PC-9 (cell line): ENCODE measurements at regions of chr1 and their contacts with region 1.

Region 1: GRCh38 chr1:36594023-36594422 is 111.3 kb upstream of the CSF3R start:
- DNase-seq: peak in 1 of 2 experiments; percentile 35
- H3K4me3 ChIP-seq: no peak overlapping the region
- H3K27ac ChIP-seq: no peak overlapping the region
- H3K4me1 ChIP-seq: no peaks in the 10 kb centered on the region
- H3K27me3 ChIP-seq: peaks cover 94% of the 10 kb centered on the region
- CTCF ChIP-seq: no peak

Region 2: GRCh38 chr1:37958690-37959089 is 1364.7 kb after region 1 on chr1:
- CTCF ChIA-PET with region 1: interaction called, 11 read pairs
- POLR2A ChIA-PET with region 1: no interaction called
- intact Hi-C with region 1: no loop called
- DNase-seq: no peak
- H3K4me3 ChIP-seq: no peak overlapping the region
- H3K27ac ChIP-seq: no peak overlapping the region
- H3K4me1 ChIP-seq: no peaks in the 10 kb centered on the region
- H3K27me3 ChIP-seq: no peaks in the 10 kb centered on the region
- CTCF ChIP-seq: no peak